ENCODE measurements at regions of chr11 and their contacts with region 1.

Region 1: GRCh38 chr11:95849087-95849825 is 59.0 kb downstream of the CEP57 start:
- DNase-seq: peak; percentile 10
- CTCF ChIP-seq: peak; percentile 48

Region 2: DNA sequence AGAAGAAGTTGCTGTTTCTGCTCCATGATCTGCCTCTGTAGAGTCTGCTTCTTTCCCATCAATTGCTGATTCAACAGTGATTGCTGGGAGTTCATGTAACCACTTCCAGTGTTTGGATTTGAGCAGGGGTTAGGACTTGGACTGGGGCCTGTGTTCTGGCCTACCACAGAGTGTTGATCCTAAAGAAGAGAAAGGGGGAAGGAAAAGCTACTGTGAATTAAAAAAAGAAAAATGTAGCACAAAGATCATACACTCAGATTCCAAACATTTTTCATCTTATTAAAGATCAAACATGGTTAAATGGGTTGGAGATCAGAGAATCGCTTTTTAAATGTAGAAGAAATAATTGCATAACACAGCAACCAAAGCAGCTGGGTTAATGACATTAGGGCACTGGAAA is 142.3 kb after region 1 on chr11:
- CTCF ChIA-PET with region 1: no interaction called
- POLR2A ChIA-PET with region 1: no interaction called
- DNase-seq: no peak
- CTCF ChIP-seq: no peak

Region 3: DNA sequence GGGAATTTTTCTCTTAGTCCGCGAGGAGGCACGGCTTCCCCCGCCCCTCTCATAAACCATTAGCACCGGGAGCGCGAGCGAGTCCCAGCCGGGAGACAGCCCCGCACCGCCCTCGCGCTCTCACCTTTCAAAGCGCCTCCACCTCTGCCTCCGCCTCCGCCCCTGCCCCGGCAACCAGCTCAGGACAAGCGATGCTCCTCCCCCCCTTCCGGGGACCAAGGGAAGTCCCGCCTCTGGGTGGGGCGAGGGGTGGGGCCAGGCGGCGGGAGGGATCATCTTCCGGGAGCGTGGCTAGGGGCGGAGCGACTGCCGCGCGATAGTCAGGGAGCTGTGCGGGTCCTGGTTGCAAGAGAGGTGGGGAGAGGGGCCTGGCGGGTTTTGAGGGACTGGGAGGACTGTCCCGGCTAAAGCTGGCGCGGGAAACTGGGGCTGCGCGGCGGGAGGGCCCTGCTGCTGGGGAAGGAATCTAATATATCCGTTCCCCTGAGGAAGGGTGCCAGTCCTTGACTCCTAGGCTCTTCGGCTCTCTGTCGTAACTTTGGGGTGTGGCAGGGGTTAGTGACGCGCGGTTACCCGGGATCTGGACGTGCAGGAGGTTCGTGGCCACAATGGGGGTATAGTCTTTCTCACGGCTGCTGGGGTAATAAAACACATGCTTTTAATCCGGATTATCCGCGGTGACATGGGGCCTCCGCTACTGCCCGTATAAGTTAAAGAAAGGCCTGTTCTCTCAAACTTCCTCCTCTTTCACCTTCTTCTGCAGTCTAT is 540.6 kb after region 1 on chr11 and contains the starts of genes CCDC82 and JRKL:
- CTCF ChIA-PET with region 1: interaction called, 10 read pairs
- POLR2A ChIA-PET with region 1: no interaction called
- DNase-seq: peak; percentile 98
- CTCF ChIP-seq: no peak

Region 4: GRCh38 chr11:96424693-96425092 is 575.4 kb after region 1 on chr11:
- CTCF ChIA-PET with region 1: interaction called, 10 read pairs
- POLR2A ChIA-PET with region 1: no interaction called
- DNase-seq: no peak
- CTCF ChIP-seq: no peak